Esophagus squamous epithelium (tissue), 5 donors: ENCODE measurements at regions of chr12 and their contacts with region 1.

Region 1: DNA sequence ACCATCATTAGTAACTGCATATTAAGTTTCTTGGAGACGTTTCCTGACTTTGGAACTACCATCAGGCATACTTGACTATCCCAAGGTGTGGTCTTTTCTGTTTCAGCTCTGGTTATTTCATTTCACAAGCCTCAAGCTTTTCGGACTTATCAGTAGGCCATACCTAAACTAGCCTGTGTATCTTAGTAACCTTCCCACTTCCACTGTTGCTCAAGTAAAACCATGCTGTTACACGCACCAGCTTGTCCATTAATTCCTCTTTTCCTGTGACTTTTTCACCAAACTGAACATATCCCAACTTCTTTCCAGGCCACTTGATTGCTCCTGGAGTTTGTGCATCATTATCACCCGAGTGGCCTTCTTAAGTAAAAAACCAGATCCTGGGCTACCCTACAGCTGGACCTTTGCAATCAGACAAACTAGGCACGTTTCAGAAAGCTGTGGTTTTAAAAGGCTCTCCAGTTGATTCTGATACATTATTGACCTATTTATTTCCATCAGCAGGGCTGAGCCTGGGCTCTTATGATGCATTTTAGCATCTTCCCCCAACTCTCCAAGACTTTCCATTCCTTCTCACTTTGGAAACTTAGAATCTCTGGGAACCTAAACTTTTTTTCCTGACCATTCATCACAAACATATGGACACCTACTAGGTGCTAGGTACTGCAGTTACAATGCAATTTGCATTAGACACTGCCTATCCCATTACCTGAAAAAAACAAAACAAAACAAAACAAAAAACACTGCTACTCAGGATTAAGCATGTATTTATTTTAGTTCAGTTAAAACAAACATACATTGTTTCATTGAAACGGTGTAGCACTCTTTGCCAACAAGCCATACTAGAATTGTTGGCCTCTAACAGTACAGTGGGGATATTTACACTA is 14.9 kb downstream of the SLC38A2 start:
- DNase-seq: no peak
- H3K4me3 ChIP-seq: no peak overlapping the region
- H3K27ac ChIP-seq: peak overlapping the region in 2 of 4 donors; percentile 1 to 25
- H3K4me1 ChIP-seq: peaks cover 0 to 60% (median 30%) of the 10 kb centered on the region in 3 donors
- H3K27me3 ChIP-seq: no peaks in the 10 kb centered on the region
- CTCF ChIP-seq: no peak
- POLR2A ChIP-seq: no peak

Region 2: GRCh38 chr12:46043972-46044520 is 313.6 kb before region 1 on chr12:
- intact Hi-C with region 1: no loop called
- DNase-seq: no peak
- H3K4me3 ChIP-seq: no peak overlapping the region
- H3K27ac ChIP-seq: no peak overlapping the region
- H3K4me1 ChIP-seq: no peaks in the 10 kb centered on the region
- H3K27me3 ChIP-seq: no peaks in the 10 kb centered on the region
- CTCF ChIP-seq: no peak
- POLR2A ChIP-seq: no peak

Region 3: GRCh38 chr12:46124848-46125619 is 232.6 kb before region 1 on chr12:
- intact Hi-C with region 1: loop called (anchors 10 kb)
- DNase-seq: no peak
- H3K4me3 ChIP-seq: peak overlapping the region in 3 of 4 donors; percentile 28 to 54 (median 28)
- H3K27ac ChIP-seq: peak overlapping the region in 2 of 4 donors; percentile 34 to 43
- H3K4me1 ChIP-seq: peaks cover 4 to 16% (median 6%) of the 10 kb centered on the region in 3 donors
- H3K27me3 ChIP-seq: no peaks in the 10 kb centered on the region
- CTCF ChIP-seq: peak; percentile 46 to 85 (median 74)
- POLR2A ChIP-seq: no peak

Region 4: DNA sequence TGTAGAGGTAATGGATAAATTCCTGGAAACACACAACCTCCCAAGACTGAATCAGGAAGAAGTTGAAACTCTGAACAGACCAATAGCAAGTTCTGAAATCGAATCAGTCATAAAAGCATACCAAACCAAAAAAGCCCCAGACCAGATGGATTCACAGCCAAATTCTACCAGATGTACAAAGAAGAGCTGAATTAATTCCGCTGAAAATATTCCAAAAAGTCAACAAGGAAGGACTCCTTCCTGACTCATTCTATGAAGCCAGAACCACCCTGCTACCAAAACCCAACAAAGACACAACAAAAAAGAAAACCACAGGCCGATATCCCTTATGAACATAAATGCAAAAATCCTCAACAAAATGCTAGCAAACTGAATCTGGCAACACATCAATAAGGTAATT is 386.6 kb after region 1 on chr12:
- intact Hi-C with region 1: no loop called
- DNase-seq: no peak
- H3K4me3 ChIP-seq: no peak overlapping the region
- H3K27ac ChIP-seq: no peak overlapping the region
- H3K4me1 ChIP-seq: no peaks in the 10 kb centered on the region
- H3K27me3 ChIP-seq: no peaks in the 10 kb centered on the region
- CTCF ChIP-seq: no peak
- POLR2A ChIP-seq: no peak